Left cardiac atrium (tissue), 4 donors: ENCODE measurements at regions of chr17 and their contacts with region 1.

Region 1: DNA sequence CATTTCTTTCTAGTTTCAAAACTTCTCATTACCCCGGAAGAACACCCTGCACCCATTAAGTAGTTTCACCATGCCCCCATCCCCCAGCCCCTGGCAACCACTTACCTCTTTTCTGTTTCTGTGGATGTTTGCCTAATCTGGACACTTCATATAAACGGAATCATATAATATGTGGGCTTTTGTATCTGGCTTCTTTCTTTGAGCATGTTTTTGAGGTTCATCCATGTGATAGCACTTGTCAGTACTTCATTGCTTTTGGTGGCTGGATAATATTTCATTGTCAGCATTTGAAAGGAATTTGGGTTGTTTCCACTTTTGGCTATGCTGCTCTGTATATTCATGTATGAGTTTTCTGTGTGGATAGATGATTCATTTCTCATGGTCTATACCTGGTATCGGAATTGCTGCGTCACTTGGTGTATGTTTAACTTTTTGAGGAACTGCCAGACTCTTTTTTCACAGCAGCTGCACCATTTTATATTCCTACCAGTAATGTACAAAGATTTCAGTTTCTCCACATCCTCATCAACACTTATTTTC is 30.0 kb upstream of the SLC5A10 start:
- DNase-seq: no peak
- ATAC-seq: no peak

Region 2: DNA sequence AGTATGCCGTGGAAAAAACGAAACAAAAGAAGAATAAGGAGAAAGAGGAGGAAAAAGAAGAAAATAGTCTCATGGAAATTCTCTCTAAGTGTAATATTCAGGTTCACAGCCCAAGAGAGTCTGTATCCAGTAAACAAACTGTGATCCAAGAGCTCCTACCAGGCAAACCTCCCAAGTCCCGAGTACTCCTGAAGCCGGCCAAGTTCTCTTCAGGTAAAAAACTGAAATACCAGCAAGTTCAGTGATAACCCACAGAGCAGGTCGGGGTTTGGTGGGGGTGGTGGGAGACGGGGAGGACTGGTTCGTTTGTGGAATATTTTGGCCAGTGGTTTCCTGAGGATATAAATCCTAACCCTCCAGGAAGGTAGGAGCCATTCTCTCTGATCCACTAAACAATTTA is 149.5 kb before region 1 on chr17:
- intact Hi-C with region 1: no loop called
- DNase-seq: no peak
- ATAC-seq: no peak

Region 3: GRCh38 chr17:18848501-18848900 is 73.5 kb before region 1 on chr17:
- intact Hi-C with region 1: no loop called
- DNase-seq: no peak
- ATAC-seq: no peak

Region 4: DNA sequence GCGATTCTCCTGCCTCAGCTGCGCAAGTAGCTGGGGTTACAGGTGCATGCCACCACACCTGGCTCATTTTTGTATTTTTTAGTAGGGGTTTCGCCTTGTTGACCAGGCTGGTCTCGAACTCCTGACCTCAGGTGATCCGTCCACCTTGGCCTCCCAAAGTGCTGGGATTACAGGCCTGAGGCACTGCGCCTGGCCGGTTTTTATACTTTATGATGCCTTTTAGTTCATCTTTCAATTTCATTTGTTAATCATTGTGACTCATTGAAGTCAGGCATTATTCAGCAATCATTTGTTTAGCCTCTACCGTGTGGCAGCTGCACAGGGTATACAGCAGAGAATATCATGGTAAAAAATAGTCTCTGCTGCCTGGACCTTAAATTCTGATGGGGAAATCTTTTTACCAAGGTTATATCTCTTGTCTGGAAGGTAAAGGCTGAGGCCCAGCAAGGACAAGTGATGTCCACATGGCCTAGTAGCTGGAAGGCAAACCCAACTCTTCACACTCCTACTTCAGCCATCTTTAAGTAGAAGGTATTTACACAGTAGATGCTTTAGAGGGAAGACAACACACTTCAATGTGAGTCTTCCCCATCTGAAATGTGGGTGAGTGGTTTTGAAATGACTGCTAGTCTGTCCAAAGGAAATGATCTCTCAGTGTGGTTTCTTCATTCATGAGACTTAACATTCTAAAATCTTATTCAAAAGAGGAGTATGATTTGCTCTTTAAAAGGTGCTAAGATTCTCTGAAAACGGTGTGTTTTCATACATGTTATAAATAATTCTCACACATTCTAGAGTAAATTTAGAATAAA is 61.6 kb before region 1 on chr17:
- intact Hi-C with region 1: loop called in 1 of 2 experiments (anchors 10 kb)
- DNase-seq: no peak
- ATAC-seq: no peak

Region 5: GRCh38 chr17:18960803-18961511 is 39.0 kb after region 1 on chr17:
- intact Hi-C with region 1: no loop called
- DNase-seq: peak; percentile 86
- ATAC-seq: peak; percentile 87 to 89

Region 6: GRCh38 chr17:19728079-19728495 is 806.1 kb after region 1 on chr17:
- intact Hi-C with region 1: no loop called
- DNase-seq: peak; percentile 87
- ATAC-seq: peak; percentile 63 to 86